Breast epithelium (tissue), 4 donors: ENCODE measurements at regions of chr6 and their contacts with region 1.

Region 1: GRCh38 chr6:2783188-2783963 is 18.2 kb downstream of the WRNIP1 start:
- DNase-seq: no peak
- H3K4me3 ChIP-seq: no peak overlapping the region
- H3K27ac ChIP-seq: no peak overlapping the region
- H3K4me1 ChIP-seq: no peaks in the 10 kb centered on the region
- H3K27me3 ChIP-seq: no peaks in the 10 kb centered on the region
- CTCF ChIP-seq: no peak
- POLR2A ChIP-seq: no peak

Region 2: DNA sequence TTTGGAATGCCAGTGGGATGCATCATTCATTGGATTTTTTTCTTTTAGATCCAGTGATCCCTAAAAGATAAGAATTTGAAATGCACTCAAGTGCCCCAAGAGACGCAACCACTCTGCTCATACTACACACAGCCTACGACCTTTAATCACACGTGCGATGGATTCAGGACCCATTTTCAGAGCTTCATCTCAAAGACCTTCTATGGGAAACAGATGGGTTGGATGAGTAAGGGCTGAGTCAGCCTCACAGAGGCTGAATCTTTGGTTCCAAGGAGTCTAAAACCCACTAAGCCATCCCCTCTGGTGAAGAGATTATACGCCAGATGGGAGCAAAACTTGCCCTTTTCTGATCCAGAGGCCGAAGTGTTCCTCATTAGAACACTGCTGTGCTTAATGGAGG is 1824.8 kb before region 1 on chr6:
- intact Hi-C with region 1: loop called (anchors 10 kb)
- DNase-seq: no peak
- H3K4me3 ChIP-seq: no peak overlapping the region
- H3K27ac ChIP-seq: no peak overlapping the region
- H3K4me1 ChIP-seq: no peaks in the 10 kb centered on the region
- H3K27me3 ChIP-seq: peaks cover 0 to 3% of the 10 kb centered on the region in 2 donors
- CTCF ChIP-seq: no peak
- POLR2A ChIP-seq: no peak

Region 3: GRCh38 chr6:3943331-3943765 is 1160.0 kb after region 1 on chr6:
- intact Hi-C with region 1: no loop called
- DNase-seq: no peak
- H3K4me3 ChIP-seq: no peak overlapping the region
- H3K27ac ChIP-seq: no peak overlapping the region
- H3K4me1 ChIP-seq: no peaks in the 10 kb centered on the region
- H3K27me3 ChIP-seq: no peaks in the 10 kb centered on the region
- CTCF ChIP-seq: no peak
- POLR2A ChIP-seq: no peak